ENCODE measurements at regions of chr14 and their contacts with region 1.

Region 1: GRCh38 chr14:71555654-71556559 is 376.3 kb upstream of the RGS6 start:
- DNase-seq: peak; percentile 65
- H3K4me3 Mint-ChIP-seq: peak overlapping the region; percentile 35
- H3K27ac Mint-ChIP-seq: peak overlapping the region; percentile 92
- H3K4me1 Mint-ChIP-seq: peaks cover 71% of the 10 kb centered on the region
- H3K27me3 Mint-ChIP-seq: no peaks in the 10 kb centered on the region

Region 2: GRCh38 chr14:71221119-71221518 is 334.8 kb before region 1 on chr14:
- intact Hi-C with region 1: loop called (anchors 1 kb)
- DNase-seq: no peak
- H3K4me3 Mint-ChIP-seq: no peak overlapping the region
- H3K27ac Mint-ChIP-seq: no peak overlapping the region
- H3K4me1 Mint-ChIP-seq: peaks cover 24% of the 10 kb centered on the region
- H3K27me3 Mint-ChIP-seq: no peaks in the 10 kb centered on the region

Region 3: DNA sequence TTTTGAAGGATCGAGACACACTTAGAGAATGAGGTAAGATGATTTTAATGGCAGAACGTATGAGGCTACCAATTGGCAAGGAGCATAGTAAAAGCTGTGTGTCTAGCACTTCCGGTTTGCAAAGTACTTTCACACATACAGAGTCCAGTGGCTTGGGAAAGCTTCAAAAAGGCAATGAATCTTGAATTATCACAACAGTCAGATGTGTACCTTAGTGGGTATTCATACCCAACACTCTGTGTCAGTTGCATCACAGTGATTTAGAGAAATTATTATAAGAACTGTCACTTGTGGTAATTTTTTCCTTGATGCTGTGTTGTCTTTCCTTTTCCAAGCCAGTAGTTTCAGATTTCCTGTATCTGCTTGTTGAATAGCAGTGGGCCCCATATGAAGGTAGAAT is 224.5 kb before region 1 on chr14:
- intact Hi-C with region 1: loop called (anchors 1 kb)
- DNase-seq: no peak
- H3K4me3 Mint-ChIP-seq: no peak overlapping the region
- H3K27ac Mint-ChIP-seq: peak overlapping the region; percentile 65
- H3K4me1 Mint-ChIP-seq: peaks cover 58% of the 10 kb centered on the region
- H3K27me3 Mint-ChIP-seq: no peaks in the 10 kb centered on the region

Region 4: GRCh38 chr14:71478542-71478941 is 77.4 kb before region 1 on chr14:
- intact Hi-C with region 1: loop called (anchors 5 kb)
- DNase-seq: no peak
- H3K4me3 Mint-ChIP-seq: no peak overlapping the region
- H3K27ac Mint-ChIP-seq: peak overlapping the region; percentile 14
- H3K4me1 Mint-ChIP-seq: peaks cover 48% of the 10 kb centered on the region
- H3K27me3 Mint-ChIP-seq: no peaks in the 10 kb centered on the region

Region 5: DNA sequence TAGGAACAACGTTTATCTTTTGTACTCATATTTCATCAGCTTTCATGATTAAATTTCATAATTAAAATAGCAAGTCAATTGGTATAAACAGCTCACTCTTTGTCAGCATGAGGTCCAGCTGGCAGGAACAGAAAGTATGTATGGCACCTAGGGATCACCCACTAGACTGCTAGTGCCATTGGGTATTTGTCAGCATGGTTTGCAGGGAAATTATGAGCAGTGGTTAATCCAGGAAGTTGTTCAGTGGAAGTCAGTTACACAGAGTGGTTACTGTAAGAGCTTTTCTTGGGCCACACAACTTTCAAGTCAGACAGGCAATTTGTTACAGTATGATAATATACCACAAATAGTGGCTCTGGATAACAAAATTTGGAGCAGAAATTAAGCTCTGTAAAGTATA is 36.0 kb after region 1 on chr14:
- intact Hi-C with region 1: loop called (anchors 2 kb)
- DNase-seq: no peak
- H3K4me3 Mint-ChIP-seq: no peak overlapping the region
- H3K27ac Mint-ChIP-seq: peak overlapping the region; percentile 60
- H3K4me1 Mint-ChIP-seq: peaks cover 70% of the 10 kb centered on the region
- H3K27me3 Mint-ChIP-seq: no peaks in the 10 kb centered on the region

Region 6: DNA sequence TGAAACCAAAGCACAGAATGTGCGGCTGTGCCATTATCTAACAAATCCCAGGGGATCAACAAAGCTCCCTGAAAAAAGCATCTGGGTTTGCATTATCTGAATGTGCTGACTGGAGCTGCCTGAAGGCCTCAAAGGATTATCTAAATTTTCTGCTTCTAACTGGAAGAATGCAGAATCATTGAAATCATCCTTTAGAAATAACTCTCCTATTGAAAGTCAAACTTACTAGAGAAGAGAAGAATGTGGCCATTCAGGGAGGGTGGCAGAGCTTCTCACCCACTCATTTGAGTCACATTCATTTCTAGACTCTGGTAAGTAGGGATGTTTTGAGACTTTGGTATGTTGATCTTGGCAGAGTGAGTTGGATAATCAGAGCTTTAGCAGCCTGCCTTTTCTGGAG is 155.7 kb after region 1 on chr14:
- intact Hi-C with region 1: loop called (anchors 1 kb)
- DNase-seq: no peak
- H3K4me3 Mint-ChIP-seq: no peak overlapping the region
- H3K27ac Mint-ChIP-seq: peak overlapping the region; percentile 83
- H3K4me1 Mint-ChIP-seq: peaks cover 32% of the 10 kb centered on the region
- H3K27me3 Mint-ChIP-seq: no peaks in the 10 kb centered on the region